Naive thymus-derived CD4-positive, alpha-beta T cell (primary cell): ENCODE measurements at regions of chr21 and their contacts with region 1.

Region 1: DNA sequence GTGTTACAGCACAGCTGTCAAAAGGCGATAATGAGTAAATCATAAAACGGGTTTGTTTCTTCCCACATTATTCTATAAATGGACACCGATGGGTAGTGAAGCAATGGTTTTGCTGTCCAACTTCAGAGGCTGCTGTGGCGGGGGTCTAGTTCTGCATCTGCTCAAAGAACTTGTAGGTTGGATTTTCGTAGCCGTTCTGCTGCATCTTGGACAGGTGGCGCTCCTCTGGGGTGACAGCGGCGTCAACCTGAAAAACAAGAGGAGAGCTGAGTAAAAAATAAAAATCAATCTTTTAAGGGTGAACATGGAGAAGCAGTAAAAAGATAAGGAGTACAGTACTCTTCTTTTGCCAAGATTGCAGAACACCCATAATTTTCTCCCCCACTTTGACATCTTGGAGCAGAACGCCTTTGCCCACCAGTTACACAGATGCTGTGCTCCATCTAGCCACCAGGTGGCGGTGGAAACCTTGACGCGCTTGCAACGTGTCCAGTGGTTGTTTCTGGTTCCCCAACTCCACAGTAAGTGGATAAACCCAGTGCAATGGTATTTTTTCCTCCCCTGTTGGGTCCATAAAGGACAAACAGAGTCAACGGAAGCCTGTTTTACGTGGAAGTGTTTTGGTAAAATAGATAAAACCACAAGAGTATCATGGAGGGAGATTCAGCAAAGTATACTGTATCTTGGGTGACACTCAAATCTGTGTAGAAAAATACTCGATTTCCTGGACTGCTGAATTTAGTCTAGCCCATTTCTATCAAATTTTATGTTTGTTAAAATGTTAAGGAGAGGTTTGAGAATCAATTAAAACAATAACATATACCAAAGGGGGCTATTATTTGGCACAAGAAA is 147.0 kb downstream of the GABPA start:
- DNase-seq: peak; percentile 27 to 66 (median 54)
- ATAC-seq: peak; percentile 81
- H3K4me3 ChIP-seq: no peak overlapping the region
- H3K4me3 Mint-ChIP-seq: no peak overlapping the region
- H3K27ac ChIP-seq: no peak overlapping the region
- H3K27ac Mint-ChIP-seq: no peak overlapping the region
- H3K4me1 ChIP-seq: no peaks in the 10 kb centered on the region
- H3K4me1 Mint-ChIP-seq: peaks cover 0 to 2% (median 0%) of the 10 kb centered on the region in 7 donors
- H3K27me3 ChIP-seq: no peaks in the 10 kb centered on the region
- H3K27me3 Mint-ChIP-seq: peaks cover 0 to 3% (median 0%) of the 10 kb centered on the region in 5 donors

Region 2: GRCh38 chr21:26366781-26367180 is 485.0 kb after region 1 on chr21:
- CTCF ChIA-PET with region 1: no interaction called
- POLR2A ChIA-PET with region 1: no interaction called
- intact Hi-C with region 1: no loop called
- DNase-seq: no peak
- ATAC-seq: no peak
- H3K4me3 ChIP-seq: no peak overlapping the region
- H3K4me3 Mint-ChIP-seq: no peak overlapping the region
- H3K27ac ChIP-seq: no peak overlapping the region
- H3K27ac Mint-ChIP-seq: no peak overlapping the region
- H3K4me1 ChIP-seq: no peaks in the 10 kb centered on the region
- H3K4me1 Mint-ChIP-seq: no peaks in the 10 kb centered on the region
- H3K27me3 ChIP-seq: no peaks in the 10 kb centered on the region
- H3K27me3 Mint-ChIP-seq: peaks cover 0 to 5% (median 0%) of the 10 kb centered on the region in 5 donors

Region 3: GRCh38 chr21:26715878-26716506 is 834.2 kb after region 1 on chr21:
- CTCF ChIA-PET with region 1: interaction called, 8 read pairs
- POLR2A ChIA-PET with region 1: no interaction called
- intact Hi-C with region 1: loop called in 1 of 2 experiments (anchors 1 kb)
- DNase-seq: peak in 4 of 9 donors; percentile 4 to 15 (median 5)
- ATAC-seq: peak; percentile 46
- H3K4me3 ChIP-seq: no peak overlapping the region
- H3K4me3 Mint-ChIP-seq: no peak overlapping the region
- H3K27ac ChIP-seq: no peak overlapping the region
- H3K27ac Mint-ChIP-seq: no peak overlapping the region
- H3K4me1 ChIP-seq: no peaks in the 10 kb centered on the region
- H3K4me1 Mint-ChIP-seq: no peaks in the 10 kb centered on the region
- H3K27me3 ChIP-seq: no peaks in the 10 kb centered on the region
- H3K27me3 Mint-ChIP-seq: peaks cover 2 to 14% (median 6%) of the 10 kb centered on the region in 5 donors